Upper lobe of right lung (tissue), 1 donor: ENCODE measurements at regions of chr6 and their contacts with region 1.

Region 1: GRCh38 chr6:5315881-5316280 is 54.6 kb downstream of the FARS2 start:
- DNase-seq: no peak
- ATAC-seq: no peak
- H3K4me3 ChIP-seq: no peak overlapping the region
- H3K27ac ChIP-seq: no peak overlapping the region
- H3K4me1 ChIP-seq: no peaks in the 10 kb centered on the region
- H3K27me3 ChIP-seq: no peaks in the 10 kb centered on the region
- CTCF ChIP-seq: no peak

Region 2: DNA sequence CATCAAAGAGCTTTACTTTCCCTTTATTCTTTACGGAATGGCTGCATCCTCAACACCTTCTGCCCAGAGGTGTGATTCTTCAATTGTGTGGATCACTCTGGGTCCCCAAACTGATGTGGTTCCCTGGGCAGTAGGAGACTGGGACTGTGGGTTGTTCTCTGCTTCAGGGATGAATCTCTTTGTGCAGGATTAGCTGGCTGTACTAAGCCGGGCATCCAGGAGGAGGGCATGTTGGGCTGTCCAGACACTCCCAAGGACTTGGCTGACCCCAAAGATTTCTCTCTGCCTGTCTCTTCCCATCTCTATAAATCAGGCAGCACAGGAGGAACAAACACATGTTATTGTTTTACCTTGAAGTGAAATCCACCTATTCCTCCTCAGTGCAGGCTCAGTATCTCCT is 39.3 kb before region 1 on chr6:
- intact Hi-C with region 1: loop called (anchors 2 kb)
- DNase-seq: no peak
- ATAC-seq: no peak
- H3K4me3 ChIP-seq: no peak overlapping the region
- H3K27ac ChIP-seq: no peak overlapping the region
- H3K4me1 ChIP-seq: peaks cover 3% of the 10 kb centered on the region
- H3K27me3 ChIP-seq: no peaks in the 10 kb centered on the region
- CTCF ChIP-seq: no peak